CD8-positive, alpha-beta T cell (primary cell): ENCODE measurements at regions of chr3 and their contacts with region 1.

Region 1: GRCh38 chr3:51682079-51682478 is 11.0 kb downstream of the TEX264 start:
- DNase-seq: peak; percentile 59 to 93 (median 71)
- ATAC-seq: peak; percentile 86
- H3K4me3 ChIP-seq: peak overlapping the region; percentile 24 to 27
- H3K4me3 Mint-ChIP-seq: peak overlapping the region; percentile 72
- H3K27ac ChIP-seq: peak overlapping the region; percentile 17 to 64
- H3K27ac Mint-ChIP-seq: peak overlapping the region; percentile 52
- H3K4me1 ChIP-seq: peaks cover 96% of the 10 kb centered on the region
- H3K4me1 Mint-ChIP-seq: peaks cover 91% of the 10 kb centered on the region
- H3K27me3 ChIP-seq: no peaks in the 10 kb centered on the region
- H3K27me3 Mint-ChIP-seq: no peaks in the 10 kb centered on the region
- CTCF ChIP-seq: peak; percentile 85

Region 2: GRCh38 chr3:51637941-51638471 is 44.1 kb before region 1 on chr3:
- CTCF ChIA-PET with region 1: interaction called, 49 read pairs
- POLR2A ChIA-PET with region 1: no interaction called
- intact Hi-C with region 1: loop called (anchors 1 kb)
- DNase-seq: peak in 3 of 9 experiments; percentile 27 to 50 (median 35)
- ATAC-seq: peak; percentile 73
- H3K4me3 ChIP-seq: no peak overlapping the region
- H3K4me3 Mint-ChIP-seq: no peak overlapping the region
- H3K27ac ChIP-seq: no peak overlapping the region
- H3K27ac Mint-ChIP-seq: no peak overlapping the region
- H3K4me1 ChIP-seq: no peaks in the 10 kb centered on the region
- H3K4me1 Mint-ChIP-seq: no peaks in the 10 kb centered on the region
- H3K27me3 ChIP-seq: no peaks in the 10 kb centered on the region
- H3K27me3 Mint-ChIP-seq: no peaks in the 10 kb centered on the region
- CTCF ChIP-seq: peak; percentile 25

Region 3: DNA sequence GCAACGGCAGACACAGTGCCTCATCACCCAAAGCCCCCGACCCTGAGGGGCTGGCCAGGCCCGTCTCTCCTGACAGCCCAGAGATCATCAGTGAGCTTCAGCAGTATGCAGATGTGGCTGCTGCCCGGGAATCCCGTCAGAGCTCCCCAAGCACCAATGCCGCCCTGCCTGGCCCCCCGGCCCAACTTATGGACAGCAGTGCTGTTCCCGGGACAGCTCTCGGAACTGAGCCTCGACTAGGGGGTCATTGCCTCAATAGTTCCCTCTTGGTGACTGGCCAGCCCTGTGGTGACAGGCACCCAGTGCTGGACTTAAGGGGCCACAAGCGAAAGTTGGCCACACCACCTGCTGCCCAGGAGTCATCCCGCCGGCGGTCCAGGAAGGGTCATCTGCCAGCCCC is 19.6 kb before region 1 on chr3:
- CTCF ChIA-PET with region 1: interaction called, 163 read pairs
- POLR2A ChIA-PET with region 1: interaction called, 4 read pairs
- intact Hi-C with region 1: no loop called
- DNase-seq: no peak
- ATAC-seq: no peak
- H3K4me3 ChIP-seq: no peak overlapping the region
- H3K4me3 Mint-ChIP-seq: no peak overlapping the region
- H3K27ac ChIP-seq: no peak overlapping the region
- H3K27ac Mint-ChIP-seq: no peak overlapping the region
- H3K4me1 ChIP-seq: no peaks in the 10 kb centered on the region
- H3K4me1 Mint-ChIP-seq: peaks cover 2% of the 10 kb centered on the region
- H3K27me3 ChIP-seq: no peaks in the 10 kb centered on the region
- H3K27me3 Mint-ChIP-seq: no peaks in the 10 kb centered on the region
- CTCF ChIP-seq: no peak

Region 4: DNA sequence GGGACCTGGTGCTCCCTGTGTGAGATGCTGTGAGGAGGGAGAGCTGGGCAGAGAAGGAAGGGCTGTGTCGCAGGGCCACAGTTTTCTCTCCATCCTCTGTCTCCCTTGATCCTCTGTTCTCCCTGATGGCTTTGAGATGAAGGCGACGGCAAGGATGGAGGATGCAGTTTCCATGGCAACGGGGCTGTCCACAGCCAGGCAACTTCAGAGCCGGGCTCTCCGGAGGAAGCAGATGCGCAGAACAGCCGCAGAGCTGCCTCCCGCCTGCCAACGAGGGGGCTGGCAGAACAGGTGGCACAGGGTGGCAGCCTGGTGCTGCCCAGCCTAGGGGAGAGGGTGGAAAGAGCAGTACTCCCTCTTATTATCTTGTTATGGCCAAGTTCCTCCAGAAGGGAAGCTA is 14.9 kb after region 1 on chr3:
- CTCF ChIA-PET with region 1: interaction called, 21 read pairs
- POLR2A ChIA-PET with region 1: interaction called, 4 read pairs
- intact Hi-C with region 1: no loop called
- DNase-seq: peak in 1 of 9 experiments; percentile 5
- ATAC-seq: no peak
- H3K4me3 ChIP-seq: no peak overlapping the region
- H3K4me3 Mint-ChIP-seq: no peak overlapping the region
- H3K27ac ChIP-seq: no peak overlapping the region
- H3K27ac Mint-ChIP-seq: peak overlapping the region; percentile 37
- H3K4me1 ChIP-seq: peaks cover 5% of the 10 kb centered on the region
- H3K4me1 Mint-ChIP-seq: peaks cover 13% of the 10 kb centered on the region
- H3K27me3 ChIP-seq: no peaks in the 10 kb centered on the region
- H3K27me3 Mint-ChIP-seq: no peaks in the 10 kb centered on the region
- CTCF ChIP-seq: no peak

Region 5: GRCh38 chr3:51710641-51711351 is 28.7 kb after region 1 on chr3:
- CTCF ChIA-PET with region 1: no interaction called
- POLR2A ChIA-PET with region 1: no interaction called
- intact Hi-C with region 1: no loop called
- DNase-seq: peak in 1 of 9 experiments; percentile 45
- ATAC-seq: no peak
- H3K4me3 ChIP-seq: no peak overlapping the region
- H3K4me3 Mint-ChIP-seq: no peak overlapping the region
- H3K27ac ChIP-seq: no peak overlapping the region
- H3K27ac Mint-ChIP-seq: no peak overlapping the region
- H3K4me1 ChIP-seq: no peaks in the 10 kb centered on the region
- H3K4me1 Mint-ChIP-seq: peaks cover 15% of the 10 kb centered on the region
- H3K27me3 ChIP-seq: no peaks in the 10 kb centered on the region
- H3K27me3 Mint-ChIP-seq: no peaks in the 10 kb centered on the region
- CTCF ChIP-seq: no peak

Region 6: GRCh38 chr3:52406231-52406661 is 724.2 kb after region 1 on chr3:
- CTCF ChIA-PET with region 1: no interaction called
- POLR2A ChIA-PET with region 1: no interaction called
- intact Hi-C with region 1: loop called in 1 of 2 experiments (anchors 5 kb)
- DNase-seq: peak in 2 of 9 experiments; percentile 32 to 33
- ATAC-seq: no peak
- H3K4me3 ChIP-seq: no peak overlapping the region
- H3K4me3 Mint-ChIP-seq: no peak overlapping the region
- H3K27ac ChIP-seq: no peak overlapping the region
- H3K27ac Mint-ChIP-seq: no peak overlapping the region
- H3K4me1 ChIP-seq: peaks cover 31% of the 10 kb centered on the region
- H3K4me1 Mint-ChIP-seq: peaks cover 28% of the 10 kb centered on the region
- H3K27me3 ChIP-seq: no peaks in the 10 kb centered on the region
- H3K27me3 Mint-ChIP-seq: no peaks in the 10 kb centered on the region
- CTCF ChIP-seq: no peak